ENCODE measurements at regions of chr15 and their contacts with region 1.

Region 1: GRCh38 chr15:75192307-75192706 is 9.4 kb upstream of the C15orf39 start:
- DNase-seq: no peak
- H3K4me3 ChIP-seq: no peak overlapping the region
- CTCF ChIP-seq: no peak

Region 2: DNA sequence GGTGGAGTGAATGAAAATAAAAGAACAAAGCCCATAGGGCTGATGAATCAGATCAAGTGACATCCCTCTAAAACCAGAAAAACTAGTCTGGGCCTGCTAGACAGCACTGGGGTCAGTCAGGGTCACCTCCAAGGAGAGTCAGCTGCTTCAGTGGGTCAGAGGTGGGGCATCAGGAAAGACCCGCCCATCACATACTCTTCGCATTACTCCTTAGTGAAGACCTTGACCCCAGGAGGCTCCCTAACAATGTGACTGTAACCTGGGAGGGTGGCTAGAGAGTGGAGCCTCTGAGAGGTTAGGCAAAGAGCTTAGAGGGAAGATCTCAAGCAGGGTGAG is 156.0 kb before region 1 on chr15:
- in situ Hi-C with region 1: loop called (anchors 5 kb)
- DNase-seq: no peak
- H3K4me3 ChIP-seq: no peak overlapping the region
- CTCF ChIP-seq: no peak

Region 3: DNA sequence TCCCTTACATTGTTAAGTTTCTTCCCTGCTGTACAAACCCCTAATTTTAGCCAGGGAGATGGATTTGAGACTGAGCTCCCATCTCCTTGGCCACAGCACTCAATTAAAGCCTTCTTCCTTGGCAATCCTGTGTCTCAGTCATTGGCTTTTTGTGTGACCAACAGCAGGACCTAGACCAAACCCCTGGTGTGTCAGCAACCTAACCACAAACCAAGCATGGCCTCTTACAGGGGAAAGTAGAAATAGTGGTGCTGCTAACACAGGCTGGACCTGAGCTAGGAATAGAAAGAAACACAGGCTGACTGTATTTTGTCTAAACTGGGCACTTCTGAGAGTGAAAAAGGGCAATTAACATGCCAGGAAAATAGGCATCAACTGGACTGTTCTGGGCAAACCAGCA is 131.0 kb before region 1 on chr15:
- in situ Hi-C with region 1: loop called (anchors 5 kb)
- DNase-seq: peak; percentile 48
- H3K4me3 ChIP-seq: no peak overlapping the region
- CTCF ChIP-seq: no peak

Region 4: DNA sequence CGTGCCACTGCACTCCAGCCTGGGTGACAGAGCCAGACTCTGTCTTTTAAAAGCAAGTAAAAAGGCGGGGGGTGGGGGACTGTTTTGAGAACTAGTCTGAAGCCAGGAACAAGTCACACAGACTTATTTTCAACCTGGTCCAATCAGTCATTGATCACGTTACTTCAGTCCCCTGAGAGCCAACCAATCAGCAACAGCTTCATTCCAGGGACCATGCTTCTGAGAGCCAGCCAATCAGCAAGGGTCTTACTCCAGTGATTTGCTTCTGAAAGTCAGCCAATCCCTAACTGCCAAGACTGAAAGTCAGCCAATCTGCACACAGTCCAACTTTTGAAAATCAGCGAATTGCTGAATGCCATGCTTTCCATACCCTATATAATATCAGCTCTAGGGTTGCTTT is 39.2 kb before region 1 on chr15:
- in situ Hi-C with region 1: no loop called
- DNase-seq: no peak
- H3K4me3 ChIP-seq: no peak overlapping the region
- CTCF ChIP-seq: no peak

Region 5: GRCh38 chr15:75349851-75350588 is 157.7 kb after region 1 on chr15:
- in situ Hi-C with region 1: no loop called
- DNase-seq: no peak
- H3K4me3 ChIP-seq: no peak overlapping the region
- CTCF ChIP-seq: no peak

Measured in astrocyte of the cerebellum (primary cell).